Activated naive CD4-positive, alpha-beta T cell treated with anti-CD3 and anti-CD28 coated beads for 36 hours (primary cell): ENCODE measurements at regions of chr4 and their contacts with region 1.

Region 1: DNA sequence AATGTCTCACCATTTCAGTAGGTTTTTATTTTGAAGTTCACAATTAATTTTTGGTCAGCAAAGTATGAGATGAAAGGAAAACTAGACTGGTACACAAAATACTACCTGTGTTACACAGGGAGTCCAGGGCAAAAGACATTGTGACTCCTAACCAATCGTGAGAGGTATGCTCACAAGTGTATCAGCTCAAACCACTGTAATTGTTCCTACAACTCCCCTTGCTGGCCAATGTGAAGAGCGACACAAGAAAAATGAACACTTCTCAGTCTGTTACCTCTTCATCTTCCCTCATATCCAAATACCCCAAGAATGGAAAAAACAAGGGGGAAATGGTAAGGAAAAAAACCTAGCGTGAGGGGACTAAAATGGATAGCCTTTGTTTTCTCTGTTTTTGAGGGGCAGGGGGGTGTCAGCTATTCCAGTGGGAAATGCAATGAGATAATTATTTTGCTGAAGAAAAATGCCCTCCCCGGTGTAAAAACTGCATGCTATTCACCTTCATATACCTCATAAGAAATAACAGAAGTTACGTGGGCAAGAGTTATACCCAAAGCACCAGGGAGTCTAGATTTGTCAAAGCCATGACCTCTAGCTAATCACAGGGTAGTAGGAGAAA is 30.6 kb upstream of the NSUN7 start:
- DNase-seq: peak; percentile 27
- H3K4me3 Mint-ChIP-seq: no peak overlapping the region
- H3K27ac Mint-ChIP-seq: no peak overlapping the region
- H3K4me1 Mint-ChIP-seq: peaks cover 8% of the 10 kb centered on the region
- H3K27me3 Mint-ChIP-seq: no peaks in the 10 kb centered on the region

Region 2: GRCh38 chr4:39697740-39698423 is 1021.2 kb before region 1 on chr4 and contains the start of gene UBE2K:
- CTCF ChIA-PET with region 1: no interaction called
- intact Hi-C with region 1: loop called (anchors 5 kb)
- DNase-seq: peak; percentile 85
- H3K4me3 Mint-ChIP-seq: peak within 1 kb of the TSS; percentile 98
- H3K27ac Mint-ChIP-seq: peak within 1 kb of the TSS; percentile 98
- H3K4me1 Mint-ChIP-seq: peaks cover 32% of the 10 kb centered on the region
- H3K27me3 Mint-ChIP-seq: no peaks in the 10 kb centered on the region
- total RNA-seq, gene UBE2K: 60.6 to 69.5 TPM

Region 3: DNA sequence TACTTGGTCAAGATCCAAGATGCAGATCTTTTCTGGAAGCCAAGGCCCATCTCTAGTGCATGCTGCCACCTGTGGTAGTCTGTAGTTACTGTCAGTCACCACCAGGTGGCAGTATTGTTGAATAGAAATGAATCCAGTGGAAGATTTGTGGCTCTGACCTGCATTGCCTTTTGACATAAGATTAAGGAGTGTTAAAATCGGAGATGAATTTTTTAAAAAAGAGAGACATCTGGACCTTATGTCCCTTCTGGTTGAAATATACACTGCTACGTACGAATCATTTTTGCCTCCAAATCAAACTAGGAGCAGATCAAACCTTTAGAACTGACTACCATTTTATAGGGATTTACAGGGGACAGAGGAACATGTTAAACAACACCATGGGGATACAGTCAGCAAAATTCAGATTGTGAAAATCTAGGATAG is 569.1 kb before region 1 on chr4:
- CTCF ChIA-PET with region 1: no interaction called
- intact Hi-C with region 1: loop called (anchors 2 kb)
- DNase-seq: peak; percentile 86
- H3K4me3 Mint-ChIP-seq: no peak overlapping the region
- H3K27ac Mint-ChIP-seq: peak overlapping the region; percentile 70
- H3K4me1 Mint-ChIP-seq: peaks cover 36% of the 10 kb centered on the region
- H3K27me3 Mint-ChIP-seq: no peaks in the 10 kb centered on the region

Region 4: GRCh38 chr4:40502934-40503333 is 216.2 kb before region 1 on chr4:
- CTCF ChIA-PET with region 1: no interaction called
- intact Hi-C with region 1: loop called (anchors 2 kb)
- DNase-seq: peak; percentile 9
- H3K4me3 Mint-ChIP-seq: no peak overlapping the region
- H3K27ac Mint-ChIP-seq: peak overlapping the region; percentile 71
- H3K4me1 Mint-ChIP-seq: peaks cover 21% of the 10 kb centered on the region
- H3K27me3 Mint-ChIP-seq: no peaks in the 10 kb centered on the region

Region 5: GRCh38 chr4:40629401-40630334 is 89.4 kb before region 1 on chr4 and contains the start of gene RBM47:
- CTCF ChIA-PET with region 1: no interaction called
- intact Hi-C with region 1: loop called (anchors 1 kb)
- DNase-seq: peak; percentile 67
- H3K4me3 Mint-ChIP-seq: peak within 1 kb of the TSS; percentile 77
- H3K27ac Mint-ChIP-seq: no peak within 1 kb of the TSS
- H3K4me1 Mint-ChIP-seq: peaks cover 25% of the 10 kb centered on the region
- H3K27me3 Mint-ChIP-seq: peaks cover 11% of the 10 kb centered on the region
- total RNA-seq, gene RBM47: 1.1 to 1.7 TPM

Region 6: DNA sequence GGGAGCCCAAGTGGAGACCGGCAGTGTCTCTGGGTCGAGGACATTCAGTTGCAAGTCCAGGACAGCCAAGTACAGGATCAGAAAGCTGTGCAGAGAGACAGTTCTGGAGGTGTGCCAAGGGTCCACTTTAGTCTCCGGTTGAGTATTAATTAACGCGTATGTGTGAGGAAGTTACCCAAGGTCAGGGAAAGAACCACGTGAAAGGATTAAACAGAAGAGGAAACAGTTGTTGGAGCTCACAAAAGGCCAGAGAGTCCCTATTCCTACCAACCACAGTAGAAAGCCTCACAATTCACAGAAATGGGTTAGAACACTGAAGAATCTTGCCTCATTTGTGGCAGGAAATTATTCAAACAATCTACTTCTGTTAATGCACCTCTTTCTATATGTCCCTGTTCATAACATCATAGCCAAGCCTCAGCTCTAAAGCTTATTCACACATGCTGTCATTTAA is 12.7 kb after region 1 on chr4:
- CTCF ChIA-PET with region 1: interaction called, 3 read pairs
- intact Hi-C with region 1: loop called (anchors 1 kb)
- DNase-seq: peak; percentile 35
- H3K4me3 Mint-ChIP-seq: no peak overlapping the region
- H3K27ac Mint-ChIP-seq: no peak overlapping the region
- H3K4me1 Mint-ChIP-seq: peaks cover 12% of the 10 kb centered on the region
- H3K27me3 Mint-ChIP-seq: no peaks in the 10 kb centered on the region

Region 7: DNA sequence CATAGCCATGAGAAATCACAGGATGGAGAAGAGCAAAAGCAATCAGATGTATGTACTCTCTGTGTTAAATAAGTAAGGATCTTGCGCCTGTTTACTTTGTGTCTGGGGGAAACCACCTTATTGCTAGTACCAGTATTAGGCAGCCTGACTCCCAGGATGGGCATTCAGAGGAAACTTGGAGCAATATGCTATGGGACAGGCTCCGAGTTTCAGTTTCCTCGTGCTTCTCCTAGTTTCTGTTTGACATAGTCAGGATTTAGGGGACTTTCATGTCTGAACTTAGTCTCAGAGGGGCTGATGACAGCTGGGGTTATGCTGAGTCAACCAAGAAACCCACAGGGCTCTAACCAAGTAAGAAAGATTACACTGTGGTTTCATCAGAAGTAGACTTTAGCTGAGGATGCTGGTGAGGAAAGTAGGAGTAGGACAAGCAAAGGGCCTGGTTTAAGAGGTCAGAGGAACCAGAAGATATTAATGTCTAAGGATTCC is 44.2 kb after region 1 on chr4:
- CTCF ChIA-PET with region 1: no interaction called
- intact Hi-C with region 1: no loop called
- DNase-seq: peak; percentile 71
- H3K4me3 Mint-ChIP-seq: no peak overlapping the region
- H3K27ac Mint-ChIP-seq: peak overlapping the region; percentile 8
- H3K4me1 Mint-ChIP-seq: peaks cover 11% of the 10 kb centered on the region
- H3K27me3 Mint-ChIP-seq: peaks cover 2% of the 10 kb centered on the region

Region 8: GRCh38 chr4:40856822-40857362 is 137.8 kb after region 1 on chr4:
- CTCF ChIA-PET with region 1: no interaction called
- intact Hi-C with region 1: no loop called
- DNase-seq: peak; percentile 62
- H3K4me3 Mint-ChIP-seq: peak overlapping the region; percentile 65
- H3K27ac Mint-ChIP-seq: no peak overlapping the region
- H3K4me1 Mint-ChIP-seq: peaks cover 3% of the 10 kb centered on the region
- H3K27me3 Mint-ChIP-seq: peaks cover 50% of the 10 kb centered on the region

Region 9: GRCh38 chr4:41095973-41096372 is 376.9 kb after region 1 on chr4:
- CTCF ChIA-PET with region 1: no interaction called
- intact Hi-C with region 1: no loop called
- DNase-seq: no peak
- H3K4me3 Mint-ChIP-seq: no peak overlapping the region
- H3K27ac Mint-ChIP-seq: no peak overlapping the region
- H3K4me1 Mint-ChIP-seq: no peaks in the 10 kb centered on the region
- H3K27me3 Mint-ChIP-seq: peaks cover 7% of the 10 kb centered on the region